Heart left ventricle (tissue), 16 donors: ENCODE measurements at regions of chr15 and their contacts with region 1.

Region 1: GRCh38 chr15:58749532-58750337 is at the start of gene ADAM10:
- DNase-seq: peak; percentile 99 to 100 (median 100)
- ATAC-seq: peak; percentile 95 to 98 (median 98)
- H3K4me3 ChIP-seq: peak within 1 kb of the TSS; percentile 75 to 95 (median 91)
- H3K27ac ChIP-seq: peak within 1 kb of the TSS; percentile 94 to 98 (median 98)
- H3K4me1 ChIP-seq: peaks cover 0 to 38% (median 25%) of the 10 kb centered on the region in 12 donors
- H3K27me3 ChIP-seq: no peaks in the 10 kb centered on the region
- CTCF ChIP-seq: peak in 1 of 12 donors; percentile 5
- POLR2A ChIP-seq: peak; percentile 46 to 90
- total RNA-seq, gene ADAM10: 32.9 to 128 (median 74.8) TPM

Region 2: DNA sequence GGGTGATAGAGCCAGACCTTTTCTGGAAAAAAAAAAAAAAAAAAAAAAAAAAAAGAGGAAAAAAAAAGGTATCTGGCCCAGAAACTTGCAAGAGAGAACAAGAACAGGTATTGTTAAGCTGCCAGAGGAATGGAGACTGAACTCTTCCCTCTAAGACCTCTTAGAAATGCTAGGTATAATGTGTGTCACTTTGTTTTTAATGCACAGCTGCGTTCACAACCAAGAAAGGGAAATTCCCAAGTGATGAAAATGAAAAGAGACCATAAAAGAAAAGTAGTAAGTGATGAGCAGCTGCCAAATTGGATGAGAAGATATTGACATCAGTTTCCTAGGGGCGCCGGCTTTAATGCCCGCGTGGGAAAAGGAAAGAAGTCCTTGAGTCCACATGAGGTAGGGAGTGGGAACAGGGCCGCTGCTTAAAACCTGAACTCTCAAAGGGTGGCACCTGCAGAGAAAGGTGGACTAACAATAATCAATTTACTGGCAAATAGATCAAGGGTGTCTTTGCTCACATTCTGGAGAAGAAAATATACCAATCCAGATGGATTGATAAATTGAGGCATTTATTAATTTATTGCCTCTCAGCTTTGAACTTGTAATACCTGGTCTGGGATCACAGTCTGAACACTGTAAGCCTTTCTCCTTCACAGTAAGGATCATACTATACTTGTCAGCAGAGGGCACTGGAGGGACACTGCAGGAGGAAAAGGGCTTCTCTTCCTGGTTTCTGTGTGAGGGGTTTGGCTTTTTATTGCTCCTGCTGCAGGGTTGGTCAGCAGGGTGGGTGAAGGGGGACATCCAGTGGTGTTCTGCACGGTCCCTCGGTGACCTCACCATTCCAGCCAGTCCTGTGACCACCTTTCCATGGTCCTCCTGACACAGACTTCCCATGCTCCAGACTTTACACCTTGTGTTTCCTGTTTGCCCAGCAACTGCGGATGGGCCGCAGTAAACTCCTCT is 480.0 kb before region 1 on chr15:
- intact Hi-C with region 1: loop called in 6 of 10 experiments (anchors 5 to 10 kb)
- DNase-seq: peak in 1 of 5 donors; percentile 52
- ATAC-seq: peak; percentile 84 to 93 (median 91)
- H3K4me3 ChIP-seq: no peak overlapping the region
- H3K27ac ChIP-seq: no peak overlapping the region
- H3K4me1 ChIP-seq: peaks cover 0 to 6% (median 0%) of the 10 kb centered on the region in 12 donors
- H3K27me3 ChIP-seq: no peaks in the 10 kb centered on the region
- CTCF ChIP-seq: peak; percentile 61 to 82 (median 68)
- POLR2A ChIP-seq: peak in 1 of 2 donors; percentile 12

Region 3: DNA sequence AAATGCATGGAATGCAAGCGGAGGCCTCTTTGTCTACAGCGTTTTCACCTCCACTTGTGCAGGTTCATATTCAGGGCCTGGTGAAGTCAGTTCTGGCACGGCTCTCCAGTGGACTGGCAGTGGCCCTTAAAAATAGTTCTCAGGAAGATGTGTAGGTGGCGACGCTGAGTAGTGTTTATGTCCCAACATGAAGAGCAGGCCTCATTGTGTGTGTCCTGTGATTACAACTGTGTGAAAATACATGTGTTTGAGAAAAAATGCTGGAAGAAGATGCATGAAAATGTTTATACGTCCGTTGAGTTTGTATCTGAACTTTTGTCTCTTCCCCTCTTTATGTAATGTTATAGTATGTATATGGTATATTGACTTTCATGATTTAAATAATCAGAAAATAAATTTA is 310.8 kb before region 1 on chr15:
- intact Hi-C with region 1: loop called in 2 of 10 experiments (anchors 10 kb)
- DNase-seq: peak in 4 of 5 donors; percentile 47 to 70 (median 66)
- ATAC-seq: peak; percentile 72 to 86 (median 76)
- H3K4me3 ChIP-seq: no peak overlapping the region
- H3K27ac ChIP-seq: peak overlapping the region in 10 of 12 donors; percentile 25 to 88 (median 85)
- H3K4me1 ChIP-seq: peaks cover 5 to 48% (median 37%) of the 10 kb centered on the region in 12 donors
- H3K27me3 ChIP-seq: no peaks in the 10 kb centered on the region
- CTCF ChIP-seq: peak in 9 of 12 donors; percentile 10 to 53 (median 34)
- POLR2A ChIP-seq: no peak

Region 4: GRCh38 chr15:58628206-58628947 is 121.4 kb before region 1 on chr15:
- intact Hi-C with region 1: loop called in 1 of 10 experiments (anchors 5 kb)
- DNase-seq: no peak
- ATAC-seq: peak in 2 of 4 donors; percentile 61 to 68
- H3K4me3 ChIP-seq: peak overlapping the region in 10 of 12 donors; percentile 5 to 49 (median 40)
- H3K27ac ChIP-seq: peak overlapping the region; percentile 6 to 89 (median 71)
- H3K4me1 ChIP-seq: peaks cover 0 to 37% (median 19%) of the 10 kb centered on the region in 12 donors
- H3K27me3 ChIP-seq: no peaks in the 10 kb centered on the region
- CTCF ChIP-seq: no peak
- POLR2A ChIP-seq: no peak

Region 5: DNA sequence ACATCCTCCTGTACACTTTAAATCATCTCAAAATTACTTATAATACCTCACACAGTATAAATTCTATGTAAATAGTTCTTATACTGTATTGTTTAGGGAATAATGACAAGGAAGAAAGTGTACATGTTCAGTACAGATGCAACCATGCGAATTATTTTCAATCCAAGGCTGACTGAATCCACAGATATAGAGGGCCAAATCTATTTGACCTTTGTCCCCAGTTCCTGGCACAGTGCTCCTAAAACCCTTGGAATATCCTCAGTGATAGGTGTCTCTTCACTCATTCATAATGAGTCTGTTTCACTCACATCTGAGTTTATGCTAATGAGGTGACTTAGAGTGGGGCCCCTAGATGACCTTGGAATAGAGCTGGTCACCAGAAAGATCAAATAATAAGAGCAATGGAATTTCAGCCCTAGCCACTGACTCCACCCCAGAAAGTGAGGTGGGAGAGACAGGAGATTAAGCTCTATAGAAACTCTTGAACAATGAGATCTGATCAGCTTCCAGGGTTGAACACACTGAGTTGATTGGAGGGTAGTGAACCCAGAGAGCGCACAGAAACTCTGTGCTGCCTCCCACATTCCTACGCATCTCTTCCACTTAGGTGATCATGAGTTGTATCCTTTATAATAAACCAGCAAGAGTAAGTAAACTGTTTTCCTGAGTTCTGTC is 65.6 kb before region 1 on chr15:
- intact Hi-C with region 1: loop called in 1 of 10 experiments (anchors 10 kb)
- DNase-seq: no peak
- ATAC-seq: no peak
- H3K4me3 ChIP-seq: no peak overlapping the region
- H3K27ac ChIP-seq: no peak overlapping the region
- H3K4me1 ChIP-seq: peaks cover 0 to 26% (median 14%) of the 10 kb centered on the region in 12 donors
- H3K27me3 ChIP-seq: no peaks in the 10 kb centered on the region
- CTCF ChIP-seq: no peak
- POLR2A ChIP-seq: no peak

Region 6: DNA sequence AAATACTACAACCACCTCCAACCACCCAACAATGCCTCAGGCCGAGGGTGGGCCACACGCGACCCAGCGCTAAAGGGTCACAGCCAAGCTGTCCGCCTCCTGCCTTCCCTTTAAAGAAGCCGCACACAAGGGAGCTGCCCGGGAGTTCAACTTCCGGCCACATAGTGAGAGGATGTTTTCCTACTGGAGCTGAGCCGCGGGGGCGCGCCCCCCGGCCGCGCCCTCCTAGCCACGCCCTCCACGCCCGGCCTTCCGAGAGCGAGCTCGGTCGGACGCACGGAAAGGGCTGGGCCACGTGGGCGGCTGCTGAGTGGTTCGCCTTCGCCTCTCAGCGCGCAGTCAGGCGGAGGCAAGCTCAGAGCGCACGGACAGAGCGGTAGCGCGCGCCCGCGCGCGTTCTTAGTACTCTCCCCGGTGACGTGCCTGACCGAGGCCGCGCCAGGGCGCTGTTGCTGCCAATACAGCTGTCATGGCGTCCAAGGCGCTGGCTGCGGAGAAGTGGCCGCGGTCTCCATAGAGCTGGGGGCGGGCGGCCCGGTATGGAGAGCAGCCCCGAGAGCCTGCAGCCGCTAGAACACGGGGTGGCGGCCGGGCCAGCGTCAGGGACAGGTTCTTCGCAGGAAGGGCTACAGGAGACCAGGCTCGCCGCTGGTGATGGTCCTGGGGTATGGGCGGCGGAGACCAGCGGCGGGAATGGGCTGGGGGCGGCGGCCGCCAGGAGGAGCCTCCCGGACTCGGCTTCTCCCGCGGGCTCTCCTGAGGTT is 21.3 kb after region 1 on chr15 and contains the start of gene MINDY2:
- intact Hi-C with region 1: loop called in 4 of 10 experiments (anchors 1 to 2 kb)
- DNase-seq: peak; percentile 98 to 100 (median 99)
- ATAC-seq: peak; percentile 97 to 98 (median 98)
- H3K4me3 ChIP-seq: peak within 1 kb of the TSS; percentile 79 to 99 (median 93)
- H3K27ac ChIP-seq: peak within 1 kb of the TSS; percentile 90 to 99 (median 98)
- H3K4me1 ChIP-seq: peaks cover 0 to 50% (median 33%) of the 10 kb centered on the region in 12 donors
- H3K27me3 ChIP-seq: no peaks in the 10 kb centered on the region
- CTCF ChIP-seq: peak in 10 of 12 donors; percentile 19 to 55 (median 31)
- POLR2A ChIP-seq: peak in 1 of 2 donors; percentile 98
- total RNA-seq, gene MINDY2: 22.2 to 31.8 (median 26.7) TPM

Region 7: GRCh38 chr15:58785355-58785754 is 35.6 kb after region 1 on chr15:
- intact Hi-C with region 1: no loop called
- DNase-seq: no peak
- ATAC-seq: no peak
- H3K4me3 ChIP-seq: no peak overlapping the region
- H3K27ac ChIP-seq: no peak overlapping the region
- H3K4me1 ChIP-seq: peaks cover 0 to 42% (median 15%) of the 10 kb centered on the region in 12 donors
- H3K27me3 ChIP-seq: no peaks in the 10 kb centered on the region
- CTCF ChIP-seq: no peak
- POLR2A ChIP-seq: no peak

Region 8: GRCh38 chr15:58906225-58906624 is 156.5 kb after region 1 on chr15:
- intact Hi-C with region 1: no loop called
- DNase-seq: no peak
- ATAC-seq: no peak
- H3K4me3 ChIP-seq: no peak overlapping the region
- H3K27ac ChIP-seq: no peak overlapping the region
- H3K4me1 ChIP-seq: peaks cover 0 to 14% (median 2%) of the 10 kb centered on the region in 12 donors
- H3K27me3 ChIP-seq: no peaks in the 10 kb centered on the region
- CTCF ChIP-seq: no peak
- POLR2A ChIP-seq: no peak